OCI-LY7 (cell line): ENCODE measurements at regions of chr16 and their contacts with region 1.

Region 1: DNA sequence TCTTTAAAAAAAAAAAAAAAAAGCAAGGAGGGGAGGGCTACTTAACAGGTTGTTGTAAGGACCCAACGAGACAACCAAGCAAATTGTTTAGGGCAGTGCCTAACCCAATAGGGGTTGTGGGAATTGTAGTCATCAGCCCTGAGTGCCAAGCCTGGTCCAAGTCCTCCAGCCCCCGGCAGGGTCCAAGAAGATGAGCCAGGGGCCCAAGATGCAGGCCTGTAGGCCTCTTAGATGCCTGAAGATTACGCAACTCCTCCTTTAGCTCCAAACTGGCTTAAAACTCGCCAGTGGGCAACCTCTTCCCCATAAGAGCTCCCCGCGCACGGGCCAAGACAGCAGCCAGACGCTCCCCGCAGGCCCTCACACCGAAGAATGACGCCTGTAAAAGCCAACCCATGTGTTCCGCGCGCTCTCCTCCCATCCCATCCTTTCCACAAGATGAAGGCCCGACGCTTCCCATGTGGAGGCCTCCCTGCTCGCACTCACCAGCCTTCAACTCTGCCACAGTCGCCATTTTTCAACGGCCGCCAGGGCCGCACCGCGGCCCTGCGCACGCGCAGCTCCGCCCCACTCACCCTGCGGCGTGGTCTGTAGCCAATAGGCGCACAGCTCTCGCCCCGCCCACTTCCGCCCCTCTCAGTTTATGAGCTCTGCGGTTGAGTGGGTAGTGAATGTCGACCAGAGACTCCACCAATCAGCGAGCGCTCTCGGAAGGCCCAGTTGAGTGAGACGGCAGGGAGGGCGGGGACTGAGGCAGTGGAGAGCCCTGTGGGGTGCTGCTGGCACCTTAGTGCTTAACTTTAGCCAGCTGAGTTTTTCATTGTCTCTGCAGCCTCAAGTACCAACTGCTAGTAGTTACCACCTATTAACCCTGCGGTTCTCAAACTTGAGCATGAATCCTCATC is at the start of gene CEP20:
- DNase-seq: peak; percentile 100
- H3K4me3 ChIP-seq: peak within 1 kb of the TSS; percentile 94
- H3K27ac ChIP-seq: peak within 1 kb of the TSS; percentile 68
- H3K4me1 ChIP-seq: peaks cover 29% of the 10 kb centered on the region
- CTCF ChIP-seq: no peak
- total RNA-seq, gene CEP20: 33.7 and 36.6 TPM in 2 replicates

Region 2: GRCh38 chr16:15874745-15875314 is 13.5 kb before region 1 on chr16:
- CTCF ChIA-PET with region 1: interaction called, 5 read pairs
- POLR2A ChIA-PET with region 1: interaction called, 17 read pairs
- intact Hi-C with region 1: no loop called
- DNase-seq: peak; percentile 42
- H3K4me3 ChIP-seq: no peak overlapping the region
- H3K27ac ChIP-seq: no peak overlapping the region
- H3K4me1 ChIP-seq: no peaks in the 10 kb centered on the region
- CTCF ChIP-seq: peak; percentile 87